Panc1 (cell line): ENCODE measurements at regions of chr16 and their contacts with region 1.

Region 1: DNA sequence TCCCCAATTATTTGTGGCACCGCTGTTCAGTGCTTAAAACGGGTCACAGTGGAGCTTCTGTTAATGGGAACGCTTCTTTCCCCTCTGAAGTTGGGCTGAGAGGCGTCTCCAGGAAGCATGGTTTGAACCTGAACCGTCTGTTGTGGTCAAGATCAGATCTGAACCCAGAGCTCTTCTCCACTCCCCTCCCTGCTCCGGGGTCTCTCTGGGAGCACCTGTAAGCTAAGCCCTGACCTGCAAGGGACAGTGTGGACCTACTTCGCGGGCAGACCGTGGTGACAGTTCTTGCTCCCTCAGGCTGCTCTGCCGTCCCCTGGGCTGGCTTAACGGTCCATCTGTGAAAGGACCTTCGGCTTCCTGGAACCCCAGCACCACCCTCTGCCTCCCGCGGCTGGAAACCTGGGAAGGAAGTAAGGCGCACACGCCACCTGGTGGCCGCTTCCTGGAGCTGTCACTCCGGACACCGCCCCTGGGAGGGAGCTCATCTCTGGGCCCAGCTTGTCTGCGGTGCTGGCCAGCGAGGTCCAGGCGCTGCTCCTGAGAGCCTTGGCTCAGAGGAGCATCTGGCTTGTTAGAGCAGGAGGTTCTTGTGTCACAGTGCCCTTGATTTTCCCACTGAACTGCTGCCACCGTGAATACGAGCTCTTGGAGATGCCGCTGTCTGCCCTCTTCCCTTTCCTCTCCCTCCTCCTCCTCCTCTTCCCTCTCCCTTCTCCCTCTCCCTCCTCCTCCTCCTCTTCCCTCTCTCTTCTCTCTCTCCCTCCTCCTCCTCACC is 518.5 kb upstream of the EEF2KMT start:
- DNase-seq: no peak
- ATAC-seq: peak; percentile 94
- H3K4me3 ChIP-seq: peak overlapping the region in 1 of 2 experiments; percentile 30; a peak in 2 of 4 replicates
- H3K27ac ChIP-seq: no peak overlapping the region
- H3K4me1 ChIP-seq: peaks cover 4% of the 10 kb centered on the region; the same call in 1 of the 2 replicates
- H3K27me3 ChIP-seq: peaks cover 4% of the 10 kb centered on the region; the same call in 1 of the 2 replicates
- CTCF ChIP-seq: peak; percentile 93

Region 2: DNA sequence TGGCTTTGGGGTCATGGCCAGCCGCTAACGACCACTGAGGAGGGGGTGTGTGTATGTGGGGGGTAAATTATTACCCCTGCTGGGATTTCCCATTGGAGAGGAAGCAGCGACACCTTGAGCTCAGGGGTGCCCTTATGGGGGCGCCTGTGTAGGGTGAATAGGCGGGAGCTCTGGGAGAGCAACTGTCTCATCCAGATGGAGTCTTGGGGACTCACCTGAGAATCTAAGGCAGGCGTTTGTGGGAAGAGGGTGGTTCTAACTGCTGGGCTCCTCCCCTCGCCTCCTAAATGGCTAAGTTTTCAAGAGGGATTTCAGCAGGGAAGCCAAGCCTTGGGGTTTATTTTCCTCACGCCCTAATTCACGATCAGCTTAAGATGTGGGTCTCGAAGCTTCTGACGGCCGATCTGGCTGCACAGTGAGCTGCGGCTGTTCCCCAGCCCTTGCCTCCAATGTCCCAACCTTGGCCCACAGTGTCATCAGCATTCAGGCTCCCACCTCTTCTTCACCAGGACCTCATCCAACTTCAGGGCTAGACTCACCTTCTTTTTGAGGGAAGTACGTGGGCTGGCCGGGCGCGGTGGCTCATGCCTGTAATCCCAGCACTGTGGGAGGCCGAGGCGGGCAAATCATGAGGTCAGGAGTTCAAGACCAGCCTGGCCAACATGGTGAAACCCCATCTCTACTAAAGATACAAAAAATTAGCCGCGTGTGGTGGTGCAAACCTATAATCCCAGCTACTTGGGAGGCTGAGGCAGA is 381.6 kb before region 1 on chr16:
- CTCF ChIA-PET with region 1: no interaction called
- POLR2A ChIA-PET with region 1: no interaction called
- in situ Hi-C with region 1: no loop called
- intact Hi-C with region 1: loop called (anchors 10 kb)
- DNase-seq: no peak
- ATAC-seq: no peak
- H3K4me3 ChIP-seq: no peak overlapping the region
- H3K27ac ChIP-seq: no peak overlapping the region
- H3K4me1 ChIP-seq: no peaks in the 10 kb centered on the region
- H3K27me3 ChIP-seq: no peaks in the 10 kb centered on the region
- CTCF ChIP-seq: no peak

Region 3: DNA sequence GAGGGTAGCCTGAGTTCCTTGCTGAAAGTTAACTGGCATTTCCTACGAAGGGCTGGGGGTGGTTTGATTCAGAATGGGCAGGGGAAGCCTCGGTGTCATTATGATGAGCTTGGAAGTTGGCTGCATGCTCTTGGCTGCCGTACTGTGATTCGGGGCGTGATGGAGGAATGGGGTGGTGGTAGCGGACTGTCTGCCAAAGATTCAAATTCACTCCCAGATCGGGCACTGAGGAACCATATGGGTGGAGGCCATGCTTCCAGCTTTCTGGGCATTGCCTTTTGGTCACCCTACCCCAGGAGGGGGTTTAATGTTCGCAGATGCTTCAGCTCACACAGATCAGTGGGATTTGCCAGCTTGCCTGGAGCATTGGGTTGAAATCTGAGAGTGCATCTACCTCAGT is 25.6 kb before region 1 on chr16:
- CTCF ChIA-PET with region 1: no interaction called
- POLR2A ChIA-PET with region 1: no interaction called
- in situ Hi-C with region 1: no loop called
- intact Hi-C with region 1: no loop called
- DNase-seq: no peak
- ATAC-seq: no peak
- H3K4me3 ChIP-seq: no peak overlapping the region
- H3K27ac ChIP-seq: no peak overlapping the region
- H3K4me1 ChIP-seq: no peaks in the 10 kb centered on the region
- H3K27me3 ChIP-seq: peaks cover 7% of the 10 kb centered on the region; the same call in 1 of the 2 replicates
- CTCF ChIP-seq: no peak

Region 4: DNA sequence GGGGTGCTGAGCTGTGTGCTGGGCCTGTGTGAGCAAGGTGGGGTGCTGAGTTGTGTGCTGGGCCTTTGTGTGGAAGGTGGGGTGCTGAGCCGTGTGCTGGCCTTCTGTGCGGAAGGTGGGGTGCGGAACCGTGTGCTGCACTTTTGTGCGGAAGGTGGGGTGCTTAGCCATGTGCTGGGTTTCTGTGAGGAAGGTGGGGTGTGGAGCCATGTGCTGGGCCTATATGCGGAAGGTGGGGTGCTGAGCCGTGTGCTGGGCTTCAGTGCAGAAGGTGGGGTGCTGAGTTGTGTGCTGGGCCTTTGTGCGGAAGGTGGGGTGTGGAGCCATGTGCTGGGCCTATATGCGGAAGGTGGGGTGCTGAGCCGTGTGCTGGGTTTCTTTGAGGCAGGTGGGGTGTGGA is 37.0 kb after region 1 on chr16:
- CTCF ChIA-PET with region 1: no interaction called
- POLR2A ChIA-PET with region 1: no interaction called
- in situ Hi-C with region 1: no loop called
- intact Hi-C with region 1: no loop called
- DNase-seq: no peak
- ATAC-seq: no peak
- H3K4me3 ChIP-seq: no peak overlapping the region
- H3K27ac ChIP-seq: no peak overlapping the region
- H3K4me1 ChIP-seq: no peaks in the 10 kb centered on the region
- H3K27me3 ChIP-seq: no peaks in the 10 kb centered on the region; the same call in 1 of the 2 replicates
- CTCF ChIP-seq: no peak

Region 5: DNA sequence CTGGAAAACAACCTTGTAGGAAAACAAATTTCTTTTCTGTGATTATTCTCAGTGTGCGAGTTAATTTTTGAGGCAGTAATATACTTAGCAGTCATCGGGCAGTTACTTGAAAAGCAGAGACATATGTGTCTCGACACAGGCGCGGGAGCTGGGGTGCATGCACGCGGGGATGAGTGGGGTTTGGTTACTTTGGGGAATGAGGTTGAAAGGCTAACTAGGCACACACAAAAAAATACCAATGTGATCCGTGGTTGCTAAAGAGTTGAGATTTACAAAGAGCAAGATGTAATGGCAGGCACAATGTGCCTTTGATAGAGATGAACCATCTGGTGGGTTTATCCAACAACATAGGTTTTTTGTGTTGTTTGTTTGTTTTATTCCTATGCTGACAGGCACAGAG is 185.3 kb after region 1 on chr16:
- CTCF ChIA-PET with region 1: no interaction called
- POLR2A ChIA-PET with region 1: no interaction called
- in situ Hi-C with region 1: no loop called
- intact Hi-C with region 1: no loop called
- DNase-seq: no peak
- ATAC-seq: no peak
- H3K4me3 ChIP-seq: no peak overlapping the region
- H3K27ac ChIP-seq: no peak overlapping the region
- H3K4me1 ChIP-seq: no peaks in the 10 kb centered on the region
- H3K27me3 ChIP-seq: no peaks in the 10 kb centered on the region
- CTCF ChIP-seq: no peak